CD4-positive, alpha-beta memory T cell (primary cell): ENCODE measurements at regions of chr7 and their contacts with region 1.

Region 1: DNA sequence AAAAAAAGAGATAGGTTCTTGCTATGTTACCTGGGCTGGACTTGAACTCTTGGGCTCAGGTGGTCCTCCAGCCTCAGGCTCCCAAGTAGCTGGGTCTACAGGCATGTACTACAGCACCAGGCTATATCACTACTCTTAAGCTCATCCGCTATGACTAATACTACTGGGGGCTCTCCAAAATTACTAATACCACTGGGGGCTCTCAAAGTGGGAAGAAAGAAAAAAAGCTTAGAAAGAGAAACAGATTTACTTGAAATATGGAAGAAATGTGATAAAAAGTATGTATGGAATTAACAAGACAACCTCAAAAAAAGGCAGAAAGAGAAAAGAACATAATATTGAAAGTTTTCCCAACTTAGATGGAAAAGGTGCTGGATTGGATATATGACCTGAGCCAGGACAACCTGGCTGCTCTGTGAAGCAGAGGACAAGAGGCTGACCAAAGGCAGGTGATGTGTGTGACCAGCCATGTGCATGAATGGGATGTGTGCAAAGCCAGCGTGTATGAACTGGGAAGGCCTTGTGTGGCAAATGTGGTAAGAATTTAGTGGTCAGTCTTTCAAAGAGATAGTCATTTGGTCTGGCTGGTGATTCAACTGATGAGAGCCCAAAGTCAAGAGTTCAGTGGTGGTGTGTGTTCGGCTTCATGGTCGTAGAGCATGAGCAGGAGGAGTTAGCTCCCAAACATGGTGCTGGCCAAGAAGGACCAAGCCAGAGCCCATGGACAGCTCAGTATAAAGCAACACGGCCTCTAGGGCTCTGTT is 232.4 kb upstream of the KLF14 start:
- DNase-seq: no peak
- H3K4me3 ChIP-seq: no peak overlapping the region
- H3K4me3 Mint-ChIP-seq: peak overlapping the region in 1 of 8 donors; percentile 4
- H3K27ac ChIP-seq: no peak overlapping the region
- H3K27ac Mint-ChIP-seq: peak overlapping the region in 6 of 7 donors; percentile 31 to 94 (median 64)
- H3K4me1 ChIP-seq: peaks cover 73% of the 10 kb centered on the region
- H3K4me1 Mint-ChIP-seq: peaks cover 47 to 66% (median 56%) of the 10 kb centered on the region in 4 donors
- H3K27me3 ChIP-seq: no peaks in the 10 kb centered on the region
- H3K27me3 Mint-ChIP-seq: no peaks in the 10 kb centered on the region

Region 2: GRCh38 chr7:130912862-130913631 is 53.4 kb before region 1 on chr7:
- CTCF ChIA-PET with region 1: interaction called, 3 read pairs
- POLR2A ChIA-PET with region 1: interaction called, 13 read pairs
- intact Hi-C with region 1: loop called (anchors 1 kb)
- DNase-seq: peak; percentile 80 to 98 (median 85)
- H3K4me3 ChIP-seq: peak overlapping the region; percentile 77 to 86
- H3K4me3 Mint-ChIP-seq: peak overlapping the region; percentile 82 to 98 (median 92)
- H3K27ac ChIP-seq: peak overlapping the region; percentile 96
- H3K27ac Mint-ChIP-seq: peak overlapping the region in 6 of 7 donors; percentile 93 to 99 (median 98)
- H3K4me1 ChIP-seq: peaks cover 86% of the 10 kb centered on the region
- H3K4me1 Mint-ChIP-seq: peaks cover 78 to 97% (median 89%) of the 10 kb centered on the region in 4 donors
- H3K27me3 ChIP-seq: no peaks in the 10 kb centered on the region
- H3K27me3 Mint-ChIP-seq: no peaks in the 10 kb centered on the region

Region 3: DNA sequence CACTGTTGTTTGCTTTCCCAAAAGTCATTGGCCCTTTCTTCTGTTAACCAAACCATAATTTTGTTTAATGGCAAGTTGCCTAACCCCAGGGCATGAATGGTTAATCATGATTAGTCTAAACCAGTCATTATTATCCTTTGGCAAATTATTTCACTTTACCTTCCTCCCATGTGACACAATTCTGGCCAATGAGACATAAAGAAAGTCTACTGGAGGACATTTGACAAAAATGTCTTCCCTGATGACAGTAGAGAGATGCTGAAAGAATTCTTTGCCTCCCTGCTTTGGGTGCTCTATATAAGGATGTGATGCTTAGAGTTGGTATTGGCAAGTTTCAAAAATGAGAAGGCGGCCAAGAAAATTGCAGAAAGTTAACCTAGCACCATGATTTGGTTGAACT is 488.1 kb after region 1 on chr7:
- CTCF ChIA-PET with region 1: no interaction called
- POLR2A ChIA-PET with region 1: no interaction called
- intact Hi-C with region 1: no loop called
- DNase-seq: no peak
- H3K4me3 ChIP-seq: no peak overlapping the region
- H3K4me3 Mint-ChIP-seq: no peak overlapping the region
- H3K27ac ChIP-seq: no peak overlapping the region
- H3K27ac Mint-ChIP-seq: no peak overlapping the region
- H3K4me1 ChIP-seq: no peaks in the 10 kb centered on the region
- H3K4me1 Mint-ChIP-seq: peaks cover 0 to 4% (median 2%) of the 10 kb centered on the region in 4 donors
- H3K27me3 ChIP-seq: no peaks in the 10 kb centered on the region
- H3K27me3 Mint-ChIP-seq: no peaks in the 10 kb centered on the region